AG04450 (cell line): ENCODE measurements at regions of chr12 and their contacts with region 1.

Region 1: GRCh38 chr12:75366629-75367028 is 24.3 kb upstream of the GLIPR1L2 start:
- DNase-seq: no peak
- H3K4me3 ChIP-seq: no peak overlapping the region
- H3K27ac ChIP-seq: no peak overlapping the region
- H3K27me3 ChIP-seq: no peaks in the 10 kb centered on the region
- CTCF ChIP-seq: no peak

Region 2: DNA sequence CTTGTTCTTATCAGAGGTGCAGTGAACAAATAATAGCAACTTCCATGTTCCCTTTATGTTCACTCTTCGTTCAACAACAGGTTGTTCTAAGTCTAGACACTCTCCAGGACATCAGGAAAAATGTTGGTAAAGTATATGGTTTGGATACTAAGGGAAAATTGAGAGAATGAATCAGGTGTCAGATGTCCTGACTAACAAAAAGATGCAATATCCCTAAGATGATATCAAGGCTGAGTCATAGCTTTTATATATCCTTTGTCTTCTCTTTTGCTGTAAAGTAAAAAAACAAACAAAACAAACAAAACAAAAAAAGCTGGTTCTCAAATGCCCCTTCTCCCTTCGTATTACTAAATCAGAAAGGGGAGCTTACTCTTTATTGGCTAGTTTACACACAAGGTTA is 21.1 kb before region 1 on chr12:
- CTCF ChIA-PET with region 1: no interaction called
- POLR2A ChIA-PET with region 1: no interaction called
- DNase-seq: no peak
- H3K4me3 ChIP-seq: no peak overlapping the region
- H3K27ac ChIP-seq: no peak overlapping the region
- H3K27me3 ChIP-seq: no peaks in the 10 kb centered on the region
- CTCF ChIP-seq: no peak

Region 3: GRCh38 chr12:75378354-75378753 is 11.7 kb after region 1 on chr12:
- CTCF ChIA-PET with region 1: interaction called, 12 read pairs
- POLR2A ChIA-PET with region 1: no interaction called
- DNase-seq: peak; percentile 23
- H3K4me3 ChIP-seq: no peak overlapping the region
- H3K27ac ChIP-seq: peak overlapping the region; percentile 62
- H3K27me3 ChIP-seq: no peaks in the 10 kb centered on the region
- CTCF ChIP-seq: no peak

Region 4: GRCh38 chr12:76375470-76375869 is 1008.8 kb after region 1 on chr12:
- CTCF ChIA-PET with region 1: interaction called, 11 read pairs
- POLR2A ChIA-PET with region 1: no interaction called
- DNase-seq: no peak
- H3K4me3 ChIP-seq: no peak overlapping the region
- H3K27ac ChIP-seq: no peak overlapping the region
- H3K27me3 ChIP-seq: no peaks in the 10 kb centered on the region
- CTCF ChIP-seq: no peak